ENCODE measurements at regions of chr1 and their contacts with region 1.

Region 1: DNA sequence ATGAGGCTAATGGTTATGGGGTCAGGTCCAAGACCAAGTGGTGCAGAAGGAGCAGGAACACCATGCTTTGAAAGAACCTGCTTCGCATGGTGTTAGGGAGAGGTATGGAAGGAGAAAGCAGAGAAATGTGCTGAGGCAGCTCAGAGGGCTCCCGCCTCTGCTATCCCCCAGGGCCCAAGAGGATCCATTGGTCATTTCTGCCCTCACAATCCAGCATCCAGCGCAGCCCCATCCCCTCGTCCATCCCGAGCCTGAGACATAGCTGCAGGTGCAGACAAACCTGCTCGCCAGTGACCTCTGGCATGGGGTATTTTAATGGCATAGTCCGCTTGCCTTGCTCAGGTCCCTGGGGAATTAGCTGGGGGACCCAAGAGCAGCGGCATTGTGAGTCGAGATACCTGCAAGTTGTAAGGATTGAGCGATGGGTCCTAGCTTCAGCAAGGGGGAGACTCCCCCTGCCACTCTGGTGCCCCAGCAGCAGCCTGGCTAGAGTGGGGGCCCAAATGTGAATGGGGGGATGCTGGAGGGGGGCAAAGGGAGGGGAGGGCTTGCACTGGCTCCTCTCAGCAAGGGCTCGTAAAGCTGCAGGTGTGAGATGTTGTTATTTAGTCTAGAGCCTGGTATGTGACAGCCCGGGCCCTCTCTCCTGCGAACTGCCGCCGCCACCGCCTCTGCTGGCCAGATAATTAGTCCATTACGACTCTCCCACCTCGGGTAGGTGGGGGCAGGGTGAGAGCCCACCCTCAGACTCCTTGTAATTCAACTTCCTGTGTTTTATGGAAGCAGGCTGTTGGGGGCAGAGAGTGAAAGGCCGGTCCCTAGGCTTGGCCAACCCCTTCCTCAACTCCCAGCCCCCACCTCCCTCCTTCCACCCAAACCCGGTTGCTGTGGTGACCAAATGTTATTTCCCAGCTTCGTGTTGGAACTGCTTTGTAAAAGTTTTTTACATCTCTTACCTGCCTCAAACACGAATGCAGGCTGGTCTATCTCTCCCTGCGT is 118.8 kb downstream of the RNF220 start:
- DNase-seq: no peak

Region 2: GRCh38 chr1:44072204-44072603 is 451.7 kb before region 1 on chr1:
- intact Hi-C with region 1: loop called in 1 of 2 experiments (anchors 5 kb)
- DNase-seq: no peak

Region 3: GRCh38 chr1:44361478-44361877 is 162.4 kb before region 1 on chr1:
- intact Hi-C with region 1: no loop called
- DNase-seq: no peak

Region 4: GRCh38 chr1:44484155-44484688 is 39.7 kb before region 1 on chr1:
- intact Hi-C with region 1: no loop called
- DNase-seq: no peak

Region 5: GRCh38 chr1:44616991-44617702 is 93.3 kb after region 1 on chr1:
- intact Hi-C with region 1: no loop called
- DNase-seq: no peak